ENCODE measurements at regions of chr1 and their contacts with region 1.

Region 1: DNA sequence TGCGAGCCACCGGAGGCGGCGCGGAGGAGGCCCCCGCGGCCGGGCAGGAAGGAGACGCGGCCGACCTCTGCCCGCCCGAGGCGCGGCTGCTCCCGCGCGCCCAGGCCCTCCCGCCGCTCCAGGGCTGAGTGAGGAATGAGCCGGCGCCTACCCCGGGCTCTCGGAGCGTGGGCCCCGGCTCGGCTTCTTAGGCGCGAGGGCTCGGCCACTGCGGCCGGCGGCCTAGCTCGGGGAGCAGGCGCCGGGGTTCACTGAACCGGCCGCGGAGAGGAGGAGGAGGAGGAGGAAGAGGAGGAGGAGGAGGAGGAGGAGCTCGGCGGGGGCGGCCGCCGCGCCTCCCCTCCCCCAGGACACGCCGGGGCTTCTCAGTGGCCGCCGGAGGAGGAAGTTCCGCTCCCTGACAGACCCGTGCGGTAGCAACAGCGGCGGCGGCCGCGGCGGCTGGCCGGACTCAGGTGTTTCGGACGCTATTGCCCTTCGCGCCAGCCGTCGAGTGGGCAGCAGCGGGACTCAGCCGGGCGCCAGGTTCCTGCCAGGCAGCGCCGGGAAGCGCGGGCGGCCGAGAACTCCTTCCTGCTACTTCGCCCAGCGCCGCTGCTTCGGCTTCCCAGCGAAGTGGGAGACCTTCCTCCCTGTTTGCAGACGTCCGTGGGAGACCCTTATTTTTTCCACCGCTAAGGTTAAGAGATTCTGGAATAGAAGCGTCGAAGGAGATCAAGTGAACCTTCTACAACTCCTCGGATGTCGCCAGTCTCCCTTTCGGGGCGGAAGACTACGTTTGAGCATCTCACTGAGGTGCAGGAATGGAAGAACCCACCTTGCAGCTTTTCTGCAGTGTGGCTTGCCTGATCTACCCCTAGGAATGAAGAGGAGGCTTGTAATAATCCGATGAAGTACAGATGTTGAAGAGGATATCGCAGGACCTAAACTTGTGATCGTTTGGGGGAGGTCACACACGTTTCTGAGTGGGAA is at the start of gene MAN1A2:
- DNase-seq: peak; percentile 53
- ATAC-seq: peak; percentile 77
- H3K4me3 ChIP-seq: peak within 1 kb of the TSS; percentile 96
- H3K27ac ChIP-seq: peak within 1 kb of the TSS; percentile 92
- H3K4me1 ChIP-seq: peaks cover 20% of the 10 kb centered on the region
- H3K27me3 ChIP-seq: no peaks in the 10 kb centered on the region
- CTCF ChIP-seq: no peak
- EP300 ChIP-seq: no peak
- POLR2A ChIP-seq: peak; percentile 79
- RAD21 ChIP-seq: no peak
- polyA plus RNA-seq, gene MAN1A2: 2.8 to 3.2 TPM

Region 2: GRCh38 chr1:116881879-116882520 is 485.3 kb before region 1 on chr1:
- CTCF ChIA-PET with region 1: no interaction called
- POLR2A ChIA-PET with region 1: no interaction called
- RAD21 ChIA-PET with region 1: no interaction called
- SMC1A ChIA-PET with region 1: no interaction called
- in situ Hi-C with region 1: no loop called
- intact Hi-C with region 1: no loop called
- DNase-seq: no peak
- ATAC-seq: peak; percentile 69
- H3K4me3 ChIP-seq: no peak overlapping the region
- H3K27ac ChIP-seq: no peak overlapping the region
- H3K4me1 ChIP-seq: peaks cover 14% of the 10 kb centered on the region; the same call in 1 of the 2 replicates
- H3K27me3 ChIP-seq: no peaks in the 10 kb centered on the region
- CTCF ChIP-seq: peak; percentile 45 to 73 (median 65)
- EP300 ChIP-seq: no peak
- POLR2A ChIP-seq: no peak
- RAD21 ChIP-seq: peak; percentile 79

Region 3: GRCh38 chr1:117416546-117417125 is 49.3 kb after region 1 on chr1:
- CTCF ChIA-PET with region 1: no interaction called
- POLR2A ChIA-PET with region 1: no interaction called
- RAD21 ChIA-PET with region 1: no interaction called
- SMC1A ChIA-PET with region 1: interaction called, 4 read pairs
- in situ Hi-C with region 1: no loop called
- intact Hi-C with region 1: loop called (anchors 5 kb)
- DNase-seq: no peak
- ATAC-seq: no peak
- H3K4me3 ChIP-seq: no peak overlapping the region
- H3K27ac ChIP-seq: no peak overlapping the region
- H3K4me1 ChIP-seq: no peaks in the 10 kb centered on the region
- H3K27me3 ChIP-seq: no peaks in the 10 kb centered on the region
- CTCF ChIP-seq: no peak
- EP300 ChIP-seq: no peak
- POLR2A ChIP-seq: no peak
- RAD21 ChIP-seq: no peak

Region 4: GRCh38 chr1:117654493-117655219 is 287.3 kb after region 1 on chr1:
- CTCF ChIA-PET with region 1: no interaction called
- POLR2A ChIA-PET with region 1: no interaction called
- RAD21 ChIA-PET with region 1: no interaction called
- SMC1A ChIA-PET with region 1: no interaction called
- in situ Hi-C with region 1: no loop called
- intact Hi-C with region 1: loop called (anchors 5 kb)
- DNase-seq: peak; percentile 89
- ATAC-seq: peak; percentile 84
- H3K4me3 ChIP-seq: peak overlapping the region; percentile 35; the same call in 1 of the 2 replicates
- H3K27ac ChIP-seq: peak overlapping the region; percentile 76
- H3K4me1 ChIP-seq: peaks cover 63% of the 10 kb centered on the region
- H3K27me3 ChIP-seq: peaks cover 0 to 3% of the 10 kb centered on the region in 2 experiments; a peak in 2 of 4 replicates
- CTCF ChIP-seq: no peak
- EP300 ChIP-seq: peak; percentile 85 to 98; a peak in 3 of 4 replicates
- POLR2A ChIP-seq: no peak
- RAD21 ChIP-seq: no peak

Measured in GM12878 (cell line).